ENCODE measurements at regions of chrX and their contacts with region 1.

Region 1: DNA sequence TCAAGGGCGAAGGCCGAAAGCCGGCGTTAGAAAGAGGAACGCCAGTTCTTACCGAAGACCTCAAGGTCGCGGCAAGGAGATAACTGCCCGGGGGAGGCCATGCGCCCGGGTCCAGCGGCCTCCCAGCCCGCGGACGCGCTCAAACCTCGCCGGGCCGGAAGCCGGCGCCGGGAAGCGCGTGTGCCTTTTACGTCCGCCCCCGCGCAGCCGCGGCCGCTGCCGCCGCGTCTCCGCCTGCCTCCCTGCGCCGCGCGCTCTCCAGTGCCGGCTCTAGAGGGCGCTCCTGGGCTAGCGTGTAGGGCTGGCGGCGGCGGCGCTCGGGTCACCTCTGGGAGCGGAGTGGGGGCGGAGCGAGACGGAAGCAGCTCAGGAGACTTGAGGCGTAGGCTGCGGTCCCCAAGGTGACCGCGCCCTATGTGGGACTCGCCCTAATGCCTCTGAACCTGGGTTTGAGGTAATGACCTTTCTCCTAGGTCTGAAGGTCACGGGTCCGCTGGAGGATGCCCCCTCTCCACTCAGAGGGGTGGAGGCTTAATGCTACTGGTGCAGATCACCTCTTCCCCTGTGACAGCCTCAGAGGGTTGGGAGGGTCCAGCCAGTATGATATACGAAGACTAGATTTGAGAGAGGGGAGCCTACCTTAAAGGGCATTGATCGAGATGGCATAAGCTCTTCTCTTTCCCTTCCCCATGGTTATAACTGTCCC is 839 bp downstream of the SLC25A5 start:
- DNase-seq: peak; percentile 49 to 84
- ATAC-seq: peak; percentile 83 to 87
- H3K4me3 ChIP-seq: peak overlapping the region; percentile 98
- H3K27ac ChIP-seq: peak overlapping the region; percentile 97 to 98
- H3K4me1 ChIP-seq: peaks cover 17% of the 10 kb centered on the region
- CTCF ChIP-seq: peak; percentile 73
- EP300 ChIP-seq: no peak
- POLR2A ChIP-seq: peak; percentile 42
- RAD21 ChIP-seq: peak; percentile 47 to 72; a peak in 4 of 5 replicates

Region 2: DNA sequence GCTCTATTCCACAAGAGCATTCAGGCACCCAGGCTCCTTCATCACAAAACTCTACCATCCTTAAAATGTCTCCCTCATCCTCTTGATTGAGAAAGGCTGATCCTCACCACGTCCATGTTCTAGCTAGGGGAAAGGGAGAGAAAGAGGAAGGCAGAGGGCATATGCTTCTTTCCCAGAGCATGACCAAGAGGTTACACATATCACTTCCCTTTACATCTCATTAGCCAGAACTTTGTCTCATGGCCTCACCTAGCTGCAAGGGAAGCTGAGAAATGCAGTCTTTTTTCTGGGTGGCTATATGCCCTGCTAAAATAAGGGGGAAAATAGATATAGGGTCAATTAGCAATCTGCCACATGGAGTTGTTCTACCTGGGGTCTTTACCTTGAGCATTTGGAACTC is 452.0 kb before region 1 on chrX:
- CTCF ChIA-PET with region 1: no interaction called
- POLR2A ChIA-PET with region 1: no interaction called
- DNase-seq: no peak
- ATAC-seq: no peak
- H3K4me3 ChIP-seq: no peak overlapping the region
- H3K27ac ChIP-seq: no peak overlapping the region
- H3K4me1 ChIP-seq: peaks cover 13% of the 10 kb centered on the region
- CTCF ChIP-seq: no peak
- EP300 ChIP-seq: no peak
- POLR2A ChIP-seq: no peak
- RAD21 ChIP-seq: no peak

Region 3: DNA sequence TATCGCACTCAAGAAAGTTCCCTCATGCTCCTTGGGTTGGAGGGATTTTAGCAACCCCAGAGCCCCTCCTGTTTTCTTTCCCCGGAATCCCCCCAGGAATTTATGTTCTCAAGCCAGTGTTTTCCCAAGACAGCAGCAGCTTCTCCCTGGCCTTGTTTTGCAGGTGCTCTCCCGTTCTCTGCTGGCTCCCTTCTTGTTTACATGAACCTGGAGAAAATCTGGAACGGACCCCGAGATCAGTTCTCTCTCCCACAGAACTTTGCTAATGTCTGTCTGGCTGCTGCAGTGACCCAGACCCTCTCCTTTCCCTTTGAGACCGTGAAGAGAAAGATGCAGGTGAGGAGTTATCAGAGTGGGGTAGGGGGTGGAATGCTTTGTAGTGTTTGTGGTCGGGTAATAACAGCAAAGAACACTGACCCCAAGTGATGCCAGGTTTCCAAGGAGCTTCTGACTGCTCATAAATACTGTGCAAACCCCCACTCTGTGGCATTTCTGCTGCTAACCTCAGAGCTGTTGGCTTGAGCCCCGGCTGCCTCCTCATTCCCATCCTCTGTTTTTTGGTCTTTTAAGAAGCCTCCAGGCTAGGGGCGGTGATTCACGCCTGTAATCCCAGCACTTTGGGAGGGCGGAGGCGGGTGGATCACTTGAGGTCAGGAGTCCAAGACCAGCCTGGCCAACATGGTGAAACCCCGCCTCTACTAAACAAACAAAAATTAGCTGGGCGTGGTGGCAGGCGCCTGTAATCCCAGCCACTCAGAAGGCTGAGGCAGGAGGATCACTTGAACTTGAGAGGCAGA is 58.9 kb before region 1 on chrX:
- CTCF ChIA-PET with region 1: interaction called, 4 read pairs
- POLR2A ChIA-PET with region 1: interaction called, 10 read pairs
- DNase-seq: peak; percentile 46 to 90
- ATAC-seq: peak; percentile 92 to 97
- H3K4me3 ChIP-seq: no peak overlapping the region
- H3K27ac ChIP-seq: peak overlapping the region; percentile 94 to 96
- H3K4me1 ChIP-seq: peaks cover 51% of the 10 kb centered on the region
- CTCF ChIP-seq: no peak
- EP300 ChIP-seq: no peak
- POLR2A ChIP-seq: no peak
- RAD21 ChIP-seq: no peak; a peak in 1 of 5 replicates

Region 4: DNA sequence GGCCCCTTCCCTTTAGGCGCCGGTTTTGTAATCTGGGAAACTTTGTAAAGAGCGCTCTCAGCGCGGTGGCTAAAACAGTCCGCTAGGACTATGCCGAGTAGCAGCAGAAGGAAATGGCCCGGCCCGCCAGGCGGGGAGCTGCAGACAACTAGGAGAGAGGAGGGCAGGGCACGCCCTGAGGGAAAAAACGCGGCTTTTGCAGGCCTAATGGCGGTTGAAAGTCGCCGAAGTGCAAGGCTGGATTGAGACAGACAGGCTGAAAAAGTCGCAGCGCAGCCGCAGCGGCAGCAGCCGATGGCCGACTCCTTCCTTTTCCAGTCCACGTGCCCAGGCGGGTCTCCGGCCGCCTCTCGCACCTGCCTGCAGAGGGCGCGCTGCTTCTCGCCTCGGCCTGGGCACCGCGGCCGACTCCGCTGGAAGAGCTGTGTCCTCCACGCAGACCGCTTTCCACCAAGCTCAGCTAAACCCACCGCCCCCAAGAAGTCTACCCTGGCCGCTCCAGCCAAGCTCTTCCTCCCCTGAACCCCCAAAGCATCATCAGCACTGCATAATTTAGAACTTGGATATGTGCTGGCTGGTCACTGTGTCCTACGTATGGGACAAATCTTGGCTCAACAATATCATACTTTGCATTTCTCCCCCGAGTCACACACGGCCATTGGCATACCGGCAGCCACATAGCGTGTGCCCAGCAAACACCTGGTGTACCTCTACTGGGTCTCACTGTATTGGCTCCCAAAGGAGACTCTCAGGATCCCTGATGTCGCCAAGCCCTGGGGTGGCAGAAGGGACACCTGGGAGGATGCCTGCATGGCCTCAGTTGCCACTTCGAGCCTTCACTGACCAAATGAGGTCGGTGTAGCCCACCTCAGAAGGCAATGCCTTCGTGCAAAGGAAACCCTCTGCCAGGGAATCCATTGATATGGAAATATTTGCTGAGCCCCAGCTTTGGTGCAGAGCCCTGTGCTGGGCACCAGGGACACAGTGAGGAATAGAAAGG is 13.7 kb after region 1 on chrX:
- CTCF ChIA-PET with region 1: interaction called, 31 read pairs
- POLR2A ChIA-PET with region 1: interaction called, 28 read pairs
- DNase-seq: peak; percentile 55 to 80
- ATAC-seq: peak; percentile 85 to 92
- H3K4me3 ChIP-seq: peak overlapping the region; percentile 31
- H3K27ac ChIP-seq: peak overlapping the region; percentile 81 to 90
- H3K4me1 ChIP-seq: peaks cover 17% of the 10 kb centered on the region
- CTCF ChIP-seq: peak; percentile 78
- EP300 ChIP-seq: no peak
- POLR2A ChIP-seq: peak; percentile 34; the same call in 1 of the 2 replicates
- RAD21 ChIP-seq: peak; percentile 35 to 58

Region 5: DNA sequence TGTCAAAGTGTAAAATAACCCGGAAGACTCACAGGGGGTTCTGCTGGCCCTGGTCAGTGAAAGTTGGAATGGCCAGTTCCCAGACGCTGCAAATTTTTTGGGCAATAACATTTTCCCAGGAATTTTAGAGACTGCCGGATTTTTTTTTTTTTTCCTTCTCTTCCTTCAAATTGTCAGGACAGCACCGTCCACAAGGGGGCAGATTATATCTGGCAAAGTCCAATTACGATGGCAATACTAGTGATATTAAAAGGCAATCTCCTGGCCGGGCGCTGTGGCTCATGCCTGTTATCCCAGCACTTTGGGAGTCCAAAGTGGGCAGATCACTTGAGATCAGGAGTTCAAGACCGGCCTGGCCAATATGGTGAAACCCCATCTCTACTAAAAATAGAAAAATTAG is 19.7 kb after region 1 on chrX:
- CTCF ChIA-PET with region 1: interaction called, 31 read pairs
- POLR2A ChIA-PET with region 1: interaction called, 3 read pairs
- DNase-seq: peak in 1 of 2 experiments; percentile 81
- ATAC-seq: peak; percentile 62 to 85; a peak in 3 of 6 replicates
- H3K4me3 ChIP-seq: no peak overlapping the region
- H3K27ac ChIP-seq: peak overlapping the region; percentile 71 to 79
- H3K4me1 ChIP-seq: peaks cover 11% of the 10 kb centered on the region
- CTCF ChIP-seq: peak; percentile 63
- EP300 ChIP-seq: no peak
- POLR2A ChIP-seq: no peak
- RAD21 ChIP-seq: peak; percentile 81 to 83